ENCODE measurements at regions of chr13 and their contacts with region 1.

Region 1: GRCh38 chr13:50911937-50912795 is 2.6 kb downstream of the RNASEH2B start:
- DNase-seq: peak; percentile 76 to 96 (median 90)
- ATAC-seq: peak; percentile 37 to 56 (median 46)
- H3K4me3 ChIP-seq: peak overlapping the region; percentile 89 to 92
- H3K4me3 Mint-ChIP-seq: peak overlapping the region; percentile 88 to 96 (median 94)
- H3K27ac ChIP-seq: peak overlapping the region; percentile 96
- H3K27ac Mint-ChIP-seq: peak overlapping the region; percentile 94
- H3K4me1 ChIP-seq: peaks cover 33 to 38% of the 10 kb centered on the region in 2 experiments
- H3K4me1 Mint-ChIP-seq: peaks cover 55 to 67% (median 64%) of the 10 kb centered on the region in 3 donors
- H3K27me3 ChIP-seq: no peaks in the 10 kb centered on the region
- H3K27me3 Mint-ChIP-seq: no peaks in the 10 kb centered on the region

Region 2: GRCh38 chr13:49792550-49793324 is 1119.4 kb before region 1 on chr13 and contains the start of gene KPNA3:
- CTCF ChIA-PET with region 1: interaction called, 9 to 12 read pairs
- POLR2A ChIA-PET with region 1: no interaction called
- DNase-seq: peak; percentile 91 to 99 (median 96)
- ATAC-seq: peak; percentile 89 to 93 (median 90)
- H3K4me3 ChIP-seq: peak within 1 kb of the TSS; percentile 75 to 84
- H3K4me3 Mint-ChIP-seq: peak within 1 kb of the TSS; percentile 82 to 95 (median 94)
- H3K27ac ChIP-seq: peak within 1 kb of the TSS; percentile 77
- H3K27ac Mint-ChIP-seq: peak within 1 kb of the TSS; percentile 89 to 98
- H3K4me1 ChIP-seq: peaks cover 12 to 21% of the 10 kb centered on the region in 2 experiments
- H3K4me1 Mint-ChIP-seq: peaks cover 38% of the 10 kb centered on the region in 3 donors
- H3K27me3 ChIP-seq: peaks cover 0 to 3% of the 10 kb centered on the region in 2 experiments
- H3K27me3 Mint-ChIP-seq: peaks cover 4% of the 10 kb centered on the region in 2 donors
- total RNA-seq, gene KPNA3: 19.6 to 22.3 (median 21.4) TPM

Region 3: DNA sequence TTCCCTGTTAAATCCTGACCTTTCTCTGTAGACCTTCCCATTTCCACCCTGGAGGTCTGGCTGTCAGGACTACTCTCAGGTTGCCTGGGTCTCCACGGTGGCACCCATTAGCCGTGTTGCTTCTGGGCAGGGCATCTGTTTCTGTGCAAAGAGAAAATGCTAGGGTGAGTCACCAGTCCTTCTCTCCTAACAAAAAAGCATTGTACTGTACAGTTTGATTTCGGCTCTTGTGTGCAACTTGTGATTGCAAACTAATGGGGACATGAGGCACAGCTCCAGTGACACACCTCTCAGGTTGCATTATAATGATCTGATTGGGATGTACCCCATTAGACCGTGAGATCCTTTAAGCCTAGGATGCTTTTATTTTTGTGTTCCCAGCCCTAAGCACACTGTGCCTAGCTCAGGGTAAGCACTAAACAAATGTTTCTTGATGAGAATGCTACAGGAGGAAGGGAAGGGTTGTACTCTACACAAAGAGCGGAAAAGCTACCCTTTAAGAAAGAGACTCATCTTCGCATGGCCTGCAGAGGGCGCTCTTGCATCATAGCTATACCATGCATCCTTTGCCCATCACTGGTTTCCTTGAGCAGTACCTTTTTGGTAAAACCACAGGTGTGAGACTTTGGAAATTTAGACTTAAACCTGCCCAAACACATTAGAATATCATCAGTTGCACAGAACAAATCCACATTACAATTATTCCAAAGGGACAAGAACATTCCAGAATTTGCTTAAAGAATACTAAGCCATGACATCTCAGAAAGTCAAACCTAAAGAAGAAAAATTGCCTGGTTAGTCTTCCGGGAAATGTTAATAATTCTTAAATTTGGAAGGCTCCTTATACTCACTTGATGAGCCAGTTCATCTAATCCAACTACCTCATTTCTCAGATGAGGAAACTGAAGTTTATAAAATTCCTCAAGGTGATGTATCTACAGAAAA is 935.6 kb before region 1 on chr13:
- CTCF ChIA-PET with region 1: interaction called, 8 to 52 read pairs
- POLR2A ChIA-PET with region 1: no interaction called
- DNase-seq: peak; percentile 39 to 92 (median 71)
- ATAC-seq: peak; percentile 75 to 84 (median 81)
- H3K4me3 ChIP-seq: no peak overlapping the region
- H3K4me3 Mint-ChIP-seq: no peak overlapping the region
- H3K27ac ChIP-seq: no peak overlapping the region
- H3K27ac Mint-ChIP-seq: no peak overlapping the region
- H3K4me1 ChIP-seq: peaks cover 0 to 2% of the 10 kb centered on the region in 2 experiments
- H3K4me1 Mint-ChIP-seq: peaks cover 0 to 2% (median 2%) of the 10 kb centered on the region in 3 donors
- H3K27me3 ChIP-seq: no peaks in the 10 kb centered on the region
- H3K27me3 Mint-ChIP-seq: no peaks in the 10 kb centered on the region

Region 4: GRCh38 chr13:50081679-50082425 is 830.3 kb before region 1 on chr13:
- CTCF ChIA-PET with region 1: interaction called, 3 to 13 read pairs
- POLR2A ChIA-PET with region 1: interaction called in 1 of 2 experiments, 3 read pairs
- DNase-seq: peak; percentile 93 to 99 (median 97)
- ATAC-seq: peak; percentile 76 to 79 (median 77)
- H3K4me3 ChIP-seq: peak overlapping the region; percentile 87 to 96
- H3K4me3 Mint-ChIP-seq: peak overlapping the region; percentile 94 to 99 (median 96)
- H3K27ac ChIP-seq: peak overlapping the region; percentile 85
- H3K27ac Mint-ChIP-seq: peak overlapping the region; percentile 95 to 96
- H3K4me1 ChIP-seq: peaks cover 31 to 37% of the 10 kb centered on the region in 2 experiments
- H3K4me1 Mint-ChIP-seq: peaks cover 38 to 66% (median 61%) of the 10 kb centered on the region in 3 donors
- H3K27me3 ChIP-seq: peaks cover 0 to 10% of the 10 kb centered on the region in 2 experiments
- H3K27me3 Mint-ChIP-seq: peaks cover 0 to 9% of the 10 kb centered on the region in 2 donors

Region 5: DNA sequence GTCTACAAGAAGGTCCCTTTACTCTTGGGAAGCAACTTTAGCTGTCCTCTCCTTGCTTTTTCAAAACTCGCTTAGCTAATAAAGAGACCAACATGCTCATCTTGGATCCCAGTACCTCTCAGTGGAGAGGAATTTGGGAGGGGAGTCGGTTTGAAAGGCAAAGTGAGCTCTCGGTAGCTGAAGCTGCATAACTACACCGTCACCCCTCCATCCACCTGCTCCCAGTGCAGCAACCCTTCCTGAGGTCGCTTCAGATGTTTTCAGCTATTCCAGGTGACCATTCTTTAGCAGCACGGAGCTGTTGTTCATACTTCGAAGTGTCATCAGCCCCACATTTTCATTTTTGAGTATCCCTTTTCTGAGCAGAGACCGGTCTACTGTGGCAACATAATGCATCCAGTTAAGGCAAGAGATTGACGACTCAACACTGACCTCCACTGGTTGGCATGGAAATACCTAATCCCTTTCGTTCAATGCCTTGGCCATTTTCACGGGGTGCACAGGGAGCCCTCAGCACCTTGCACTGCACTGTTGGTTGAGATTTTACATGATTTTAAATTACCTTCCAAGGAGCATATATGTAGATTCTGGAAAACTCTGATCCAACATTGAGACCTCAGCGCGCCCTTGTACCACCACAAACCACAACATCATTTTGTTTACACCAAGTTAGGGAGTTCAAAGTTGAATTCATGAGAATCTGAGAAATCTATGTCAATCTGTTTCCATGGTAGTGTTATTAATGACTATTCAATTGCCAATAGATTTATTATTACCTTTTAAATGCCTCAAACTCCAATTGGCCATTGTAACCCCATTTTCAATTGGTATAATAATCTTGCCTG is 110.9 kb before region 1 on chr13:
- CTCF ChIA-PET with region 1: interaction called, 9 to 18 read pairs
- POLR2A ChIA-PET with region 1: no interaction called
- DNase-seq: peak; percentile 14 to 84 (median 48)
- ATAC-seq: peak; percentile 90 to 95 (median 94)
- H3K4me3 ChIP-seq: no peak overlapping the region
- H3K4me3 Mint-ChIP-seq: no peak overlapping the region
- H3K27ac ChIP-seq: no peak overlapping the region
- H3K27ac Mint-ChIP-seq: peak overlapping the region in 1 of 2 donors; percentile 4
- H3K4me1 ChIP-seq: peaks cover 6 to 10% of the 10 kb centered on the region in 2 experiments
- H3K4me1 Mint-ChIP-seq: peaks cover 6 to 13% (median 7%) of the 10 kb centered on the region in 3 donors
- H3K27me3 ChIP-seq: no peaks in the 10 kb centered on the region
- H3K27me3 Mint-ChIP-seq: no peaks in the 10 kb centered on the region

Region 6: DNA sequence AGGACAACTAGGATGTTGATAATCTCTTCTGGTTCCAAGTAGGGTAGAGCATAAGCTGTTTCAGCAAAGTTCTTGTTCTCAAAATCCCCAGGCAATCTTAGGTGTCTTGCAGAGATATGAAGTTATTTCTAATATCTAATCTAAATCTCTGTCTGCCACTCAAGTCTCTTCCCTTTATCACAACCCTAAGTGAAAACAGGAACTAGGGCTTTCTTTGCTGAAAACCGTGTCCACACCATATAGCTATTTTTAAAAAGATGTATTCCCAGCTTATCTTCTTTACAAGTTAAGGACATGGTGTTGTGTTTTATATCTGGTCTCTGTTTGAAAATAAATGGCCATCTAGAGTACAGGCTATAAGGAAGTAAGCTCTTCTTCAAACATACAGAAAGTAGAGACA is 13.8 kb before region 1 on chr13:
- CTCF ChIA-PET with region 1: interaction called, 6 to 69 read pairs
- POLR2A ChIA-PET with region 1: interaction called, 3 to 10 read pairs
- DNase-seq: no peak
- ATAC-seq: no peak
- H3K4me3 ChIP-seq: no peak overlapping the region
- H3K4me3 Mint-ChIP-seq: no peak overlapping the region
- H3K27ac ChIP-seq: no peak overlapping the region
- H3K27ac Mint-ChIP-seq: no peak overlapping the region
- H3K4me1 ChIP-seq: peaks cover 6 to 11% of the 10 kb centered on the region in 2 experiments
- H3K4me1 Mint-ChIP-seq: peaks cover 16% of the 10 kb centered on the region in 3 donors
- H3K27me3 ChIP-seq: no peaks in the 10 kb centered on the region
- H3K27me3 Mint-ChIP-seq: peaks cover 0 to 4% of the 10 kb centered on the region in 2 donors

Region 7: DNA sequence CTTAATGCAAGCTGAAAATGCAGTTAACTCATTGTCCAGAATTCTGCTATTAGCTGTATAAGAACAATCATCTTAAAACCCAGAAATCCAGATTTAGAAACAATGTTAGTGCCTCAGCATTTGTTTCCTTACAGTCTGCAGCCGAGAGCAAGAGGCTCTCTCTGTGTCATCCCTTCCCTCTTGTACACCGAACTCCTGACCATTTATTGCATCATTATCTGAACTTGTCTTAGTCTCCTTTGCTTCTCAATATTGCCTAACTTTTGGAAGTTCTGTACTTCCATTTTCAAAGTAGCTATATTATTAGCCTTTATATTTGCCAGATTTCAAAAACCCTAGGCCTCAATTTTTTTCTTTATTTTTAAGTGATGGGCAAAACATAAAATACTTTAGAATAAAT is 24.5 kb after region 1 on chr13:
- CTCF ChIA-PET with region 1: no interaction called
- POLR2A ChIA-PET with region 1: no interaction called
- DNase-seq: no peak
- ATAC-seq: no peak
- H3K4me3 ChIP-seq: no peak overlapping the region
- H3K4me3 Mint-ChIP-seq: no peak overlapping the region
- H3K27ac ChIP-seq: no peak overlapping the region
- H3K27ac Mint-ChIP-seq: no peak overlapping the region
- H3K4me1 ChIP-seq: peaks cover 0 to 2% of the 10 kb centered on the region in 2 experiments
- H3K4me1 Mint-ChIP-seq: peaks cover 3 to 13% (median 8%) of the 10 kb centered on the region in 3 donors
- H3K27me3 ChIP-seq: no peaks in the 10 kb centered on the region
- H3K27me3 Mint-ChIP-seq: no peaks in the 10 kb centered on the region

Region 8: GRCh38 chr13:51058461-51059167 is 146.4 kb after region 1 on chr13:
- CTCF ChIA-PET with region 1: no interaction called
- POLR2A ChIA-PET with region 1: no interaction called
- DNase-seq: no peak
- ATAC-seq: no peak
- H3K4me3 ChIP-seq: no peak overlapping the region
- H3K4me3 Mint-ChIP-seq: no peak overlapping the region
- H3K27ac ChIP-seq: no peak overlapping the region
- H3K27ac Mint-ChIP-seq: no peak overlapping the region
- H3K4me1 ChIP-seq: no peaks in the 10 kb centered on the region
- H3K4me1 Mint-ChIP-seq: no peaks in the 10 kb centered on the region
- H3K27me3 ChIP-seq: no peaks in the 10 kb centered on the region
- H3K27me3 Mint-ChIP-seq: no peaks in the 10 kb centered on the region